Activated T-helper 2 cell treated with anti-CD3 and anti-CD28 coated beads, Interferon-gamma antibody, Interleukin-2, Interleukin-4, amounts not matched to agents 10 μg/mL and 5 μg/mL and 100 μg/mL, durations not matched to agents 14 hours and 24 hours and 36 hours (primary cell): ENCODE measurements at regions of chr11 and their contacts with region 1.

Region 1: DNA sequence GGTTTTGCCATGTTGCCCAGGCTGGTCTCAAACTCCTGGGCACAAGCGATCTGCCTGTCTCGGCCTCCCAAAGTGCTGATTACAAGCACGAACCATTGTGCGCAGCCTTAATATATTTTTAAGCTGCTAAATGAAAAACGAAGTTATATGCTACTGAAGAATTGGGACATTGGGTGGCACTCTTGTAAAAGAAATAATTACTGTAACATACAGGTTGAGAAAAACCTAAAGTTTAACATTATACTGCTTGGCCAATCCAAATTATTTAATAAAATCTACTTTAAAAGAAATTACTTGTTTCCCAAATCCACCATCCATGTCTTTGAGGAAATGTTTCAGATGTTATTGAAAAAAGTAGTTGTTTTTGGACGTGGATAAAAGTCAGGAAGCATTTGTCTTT is 37.9 kb upstream of the ARHGAP32 start:
- DNase-seq: no peak
- H3K4me3 Mint-ChIP-seq: no peak overlapping the region
- H3K27ac Mint-ChIP-seq: no peak overlapping the region
- H3K4me1 Mint-ChIP-seq: no peaks in the 10 kb centered on the region
- H3K27me3 Mint-ChIP-seq: peaks cover 3% of the 10 kb centered on the region

Region 2: DNA sequence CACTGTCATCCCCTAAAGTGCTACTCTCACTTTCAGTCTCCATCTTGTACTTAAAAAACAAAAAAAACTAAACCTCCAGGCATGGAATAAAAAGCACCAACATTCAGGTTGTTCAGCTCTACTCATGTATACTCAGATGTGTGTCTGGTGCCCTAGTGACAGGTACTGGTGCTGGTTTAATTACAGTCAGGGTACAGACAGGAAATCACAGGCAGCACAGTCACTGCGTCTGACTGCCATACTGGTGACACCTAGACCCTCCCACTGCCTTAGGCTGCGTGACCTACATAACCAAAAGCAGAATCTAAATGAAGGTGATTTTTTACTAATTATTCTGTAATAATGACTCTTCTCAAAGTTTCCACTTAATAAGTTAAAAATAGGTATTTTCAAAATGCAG is 37.9 kb before region 1 on chr11 and contains the start of gene ARHGAP32:
- intact Hi-C with region 1: no loop called
- DNase-seq: no peak
- H3K4me3 Mint-ChIP-seq: no peak within 1 kb of the TSS
- H3K27ac Mint-ChIP-seq: no peak within 1 kb of the TSS
- H3K4me1 Mint-ChIP-seq: no peaks in the 10 kb centered on the region
- H3K27me3 Mint-ChIP-seq: no peaks in the 10 kb centered on the region
- total RNA-seq, gene ARHGAP32: 4.6 and 6.1 TPM in 2 replicates

Region 3: GRCh38 chr11:129249351-129249750 is 19.3 kb after region 1 on chr11:
- intact Hi-C with region 1: no loop called
- DNase-seq: no peak
- H3K4me3 Mint-ChIP-seq: no peak overlapping the region
- H3K27ac Mint-ChIP-seq: no peak overlapping the region
- H3K4me1 Mint-ChIP-seq: peaks cover 39% of the 10 kb centered on the region
- H3K27me3 Mint-ChIP-seq: peaks cover 2% of the 10 kb centered on the region

Region 4: DNA sequence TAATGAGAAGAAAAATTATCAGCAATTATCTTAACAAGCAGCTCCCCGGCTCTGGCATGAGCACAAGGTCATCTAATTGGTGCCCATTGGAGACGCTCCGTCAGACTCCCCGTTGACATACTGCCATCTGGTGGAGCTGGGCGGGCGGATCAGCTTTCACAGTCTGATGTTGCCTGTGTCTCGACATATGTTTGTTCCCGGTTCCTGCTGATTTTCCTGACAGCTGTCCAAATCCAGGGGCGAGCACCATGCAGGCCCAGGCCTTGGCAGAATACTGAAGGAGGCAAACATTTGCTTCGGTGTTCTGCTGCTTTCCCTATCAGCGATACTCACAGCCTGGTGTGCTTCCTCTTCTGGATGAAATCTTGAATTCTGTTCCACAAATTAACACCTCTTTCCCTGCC is 101.9 kb after region 1 on chr11:
- intact Hi-C with region 1: loop called (anchors 1 kb)
- DNase-seq: peak; percentile 40
- H3K4me3 Mint-ChIP-seq: no peak overlapping the region
- H3K27ac Mint-ChIP-seq: no peak overlapping the region
- H3K4me1 Mint-ChIP-seq: peaks cover 2% of the 10 kb centered on the region
- H3K27me3 Mint-ChIP-seq: peaks cover 3% of the 10 kb centered on the region